Mammary epithelial cell (primary cell): ENCODE measurements at regions of chr3 and their contacts with region 1.

Region 1: GRCh38 chr3:170726976-170727661 is 141.2 kb upstream of the SLC7A14 start:
- DNase-seq: peak; percentile 84
- H3K4me3 ChIP-seq: peak overlapping the region in 2 of 3 experiments; percentile 4 to 12
- H3K27ac ChIP-seq: peak overlapping the region; percentile 97
- H3K4me1 ChIP-seq: peaks cover 42% of the 10 kb centered on the region
- H3K27me3 ChIP-seq: no peaks in the 10 kb centered on the region
- CTCF ChIP-seq: no peak

Region 2: DNA sequence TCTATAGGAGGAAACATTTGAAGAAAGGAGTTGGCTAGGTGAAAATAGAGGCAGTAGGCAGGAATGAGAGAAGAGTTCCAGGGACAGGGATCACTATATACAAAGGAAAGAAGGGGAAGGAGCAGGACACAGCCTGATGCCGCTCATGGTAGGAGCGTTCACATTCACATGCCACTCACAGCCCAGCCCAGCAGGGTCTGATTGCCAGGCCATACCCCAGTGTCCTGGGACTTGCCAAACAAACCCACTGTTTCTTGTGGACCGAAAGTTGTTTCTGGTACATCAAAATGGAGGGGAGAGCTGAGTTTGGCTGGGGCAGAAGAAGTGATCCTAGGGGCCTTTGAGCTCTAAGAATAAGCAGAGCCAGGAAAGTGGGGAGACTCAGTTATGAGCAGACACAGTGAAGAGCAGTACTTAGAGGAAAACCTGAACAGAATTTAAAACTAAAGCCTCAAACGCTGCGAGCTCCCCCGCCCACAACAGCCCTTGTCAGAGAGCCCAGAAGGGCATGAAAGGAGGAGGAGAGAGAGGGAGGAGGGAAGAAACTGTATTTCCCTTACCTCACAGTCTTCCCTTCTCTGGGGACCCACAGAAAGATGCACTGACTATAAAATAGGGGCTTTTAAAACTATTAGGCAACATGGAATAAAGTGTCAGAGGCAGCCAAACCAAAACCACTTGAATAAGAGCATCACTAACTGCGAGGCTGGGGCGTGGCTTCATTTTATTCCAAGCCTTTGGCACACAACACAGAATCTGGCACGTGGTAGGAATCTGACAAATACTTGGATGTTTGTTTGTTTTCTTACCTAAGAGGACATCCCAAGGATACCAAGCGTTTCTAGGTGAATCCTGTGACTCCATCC is 13.8 kb after region 1 on chr3:
- CTCF ChIA-PET with region 1: no interaction called
- dilution Hi-C with region 1: no loop called
- in situ Hi-C with region 1: no loop called
- intact Hi-C with region 1: loop called (anchors 1 kb)
- DNase-seq: peak; percentile 73
- H3K4me3 ChIP-seq: no peak overlapping the region
- H3K27ac ChIP-seq: peak overlapping the region; percentile 79
- H3K4me1 ChIP-seq: peaks cover 44% of the 10 kb centered on the region
- H3K27me3 ChIP-seq: no peaks in the 10 kb centered on the region
- CTCF ChIP-seq: no peak

Region 3: GRCh38 chr3:170751083-170751898 is 24.2 kb after region 1 on chr3:
- CTCF ChIA-PET with region 1: interaction called, 4 read pairs
- dilution Hi-C with region 1: no loop called
- in situ Hi-C with region 1: no loop called
- intact Hi-C with region 1: loop called (anchors 1 kb)
- DNase-seq: peak; percentile 90
- H3K4me3 ChIP-seq: no peak overlapping the region
- H3K27ac ChIP-seq: peak overlapping the region; percentile 67
- H3K4me1 ChIP-seq: peaks cover 47% of the 10 kb centered on the region
- H3K27me3 ChIP-seq: no peaks in the 10 kb centered on the region
- CTCF ChIP-seq: no peak